Activated T-helper 1 cell treated with anti-CD3 and anti-CD28 coated beads, Interleukin-12 subunit alpha, Interleukin-12 subunit beta, Interleukin-2, Interleukin-4 antibody, amounts not matched to agents 30 ng/mL and 10 ng/mL and 1 ng/mL, durations not matched to agents 14 hours and 24 hours and 36 hours (primary cell): ENCODE measurements at regions of chr4 and their contacts with region 1.

Region 1: DNA sequence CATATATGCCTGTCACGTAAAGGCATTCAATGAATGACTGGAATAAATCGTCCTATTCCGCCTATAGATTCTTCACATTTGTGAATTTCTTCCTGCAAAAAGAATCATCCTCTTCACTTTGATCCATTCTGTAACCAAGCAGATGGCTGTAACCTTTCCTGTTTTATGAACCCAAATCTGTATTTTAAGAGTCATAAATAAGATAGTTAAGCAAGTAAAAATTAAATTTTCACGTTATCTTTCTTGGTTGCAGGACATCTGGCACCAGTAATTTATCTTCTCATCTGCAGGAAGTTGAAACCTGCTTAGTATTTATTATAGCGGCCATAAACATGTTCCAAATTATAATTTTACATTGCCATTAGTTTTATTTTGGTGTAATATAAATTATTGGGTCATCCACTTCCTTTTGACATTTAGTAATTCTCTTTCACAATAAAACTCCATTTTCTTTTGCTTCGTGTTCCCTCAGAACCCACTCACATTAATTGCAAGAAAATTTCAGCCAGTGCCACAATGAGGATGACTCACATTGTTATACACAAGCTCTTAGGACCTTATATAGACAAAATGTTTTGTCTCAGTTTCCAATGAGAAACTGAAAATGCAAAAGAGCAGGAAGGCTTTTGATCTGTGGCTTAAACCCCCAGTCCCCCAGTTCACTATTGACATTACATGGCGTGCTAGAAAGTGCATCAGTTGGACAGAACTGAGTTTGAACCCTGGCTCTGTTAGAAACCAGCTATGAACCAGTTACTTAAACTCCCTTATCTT is 51.1 kb downstream of the TMEM156 start:
- DNase-seq: no peak
- H3K4me3 Mint-ChIP-seq: peak overlapping the region; percentile 25
- H3K27ac Mint-ChIP-seq: peak overlapping the region; percentile 81
- H3K4me1 Mint-ChIP-seq: peaks cover 59% of the 10 kb centered on the region
- H3K27me3 Mint-ChIP-seq: no peaks in the 10 kb centered on the region

Region 2: GRCh38 chr4:38759113-38759789 is 221.8 kb before region 1 on chr4:
- intact Hi-C with region 1: loop called (anchors 10 kb)
- DNase-seq: peak; percentile 34
- H3K4me3 Mint-ChIP-seq: no peak overlapping the region
- H3K27ac Mint-ChIP-seq: no peak overlapping the region
- H3K4me1 Mint-ChIP-seq: peaks cover 29% of the 10 kb centered on the region
- H3K27me3 Mint-ChIP-seq: no peaks in the 10 kb centered on the region

Region 3: DNA sequence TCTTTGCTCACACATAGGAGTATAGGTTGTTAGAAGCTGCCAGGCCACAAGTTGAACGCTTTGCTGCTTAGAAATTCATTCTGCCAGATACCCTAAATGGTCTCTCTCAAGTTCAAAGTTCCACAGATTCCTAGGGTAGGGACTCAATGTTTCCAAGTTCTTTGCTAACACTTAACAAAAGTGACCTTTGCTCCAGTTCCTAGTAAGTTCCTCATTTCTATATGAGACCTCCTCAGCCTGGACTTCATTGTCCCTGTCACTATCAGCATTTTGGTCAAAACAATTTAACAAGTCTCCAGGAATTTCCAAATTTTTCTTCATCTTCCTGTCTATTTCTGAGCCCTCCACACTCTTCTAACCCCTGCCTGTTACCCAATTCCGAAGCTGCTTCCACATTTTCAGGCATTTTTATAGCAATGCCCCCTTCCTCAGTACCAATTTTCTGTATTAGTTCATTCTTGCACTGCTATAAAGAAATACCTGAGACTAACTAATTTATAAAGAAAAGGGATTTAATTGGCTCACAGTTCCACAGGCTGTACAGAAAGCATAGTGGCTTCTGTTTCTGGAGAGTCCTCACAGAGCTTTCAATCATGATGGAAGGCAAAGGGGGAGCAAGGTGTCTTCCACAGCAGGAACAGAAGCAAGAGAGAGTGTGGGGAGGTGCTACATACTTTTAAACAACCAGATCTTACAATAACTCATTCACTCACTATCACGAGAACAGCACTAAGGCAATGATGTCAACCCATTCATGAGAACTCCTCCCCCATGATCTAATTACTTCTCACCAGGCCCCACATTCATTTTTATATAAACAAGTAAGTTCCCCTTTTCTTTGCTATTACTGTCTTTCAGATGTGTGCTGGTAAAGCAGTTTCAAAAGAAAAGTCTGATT is 165.0 kb before region 1 on chr4:
- intact Hi-C with region 1: loop called (anchors 5 kb)
- DNase-seq: no peak
- H3K4me3 Mint-ChIP-seq: no peak overlapping the region
- H3K27ac Mint-ChIP-seq: no peak overlapping the region
- H3K4me1 Mint-ChIP-seq: peaks cover 45% of the 10 kb centered on the region
- H3K27me3 Mint-ChIP-seq: no peaks in the 10 kb centered on the region

Region 4: DNA sequence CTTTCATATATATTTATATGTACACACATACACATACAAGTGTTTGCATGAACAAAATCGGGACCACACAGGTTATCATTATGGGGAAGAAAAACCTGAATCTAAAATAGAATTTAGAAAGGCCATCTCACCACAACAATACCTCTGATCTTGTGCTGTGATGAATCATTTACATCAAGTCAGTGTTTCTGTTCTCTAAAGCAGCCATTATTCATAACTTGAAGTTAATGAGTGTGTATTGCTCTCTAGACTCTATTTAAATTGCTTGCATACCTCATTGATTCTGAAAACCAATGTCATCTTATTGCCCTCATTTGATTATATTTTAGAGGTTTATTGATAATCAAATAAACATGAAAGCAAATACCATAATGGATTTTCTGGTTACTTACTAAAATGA is 41.9 kb before region 1 on chr4:
- intact Hi-C with region 1: loop called (anchors 1 kb)
- DNase-seq: no peak
- H3K4me3 Mint-ChIP-seq: no peak overlapping the region
- H3K27ac Mint-ChIP-seq: peak overlapping the region; percentile 49
- H3K4me1 Mint-ChIP-seq: peaks cover 43% of the 10 kb centered on the region
- H3K27me3 Mint-ChIP-seq: no peaks in the 10 kb centered on the region

Region 5: GRCh38 chr4:38995670-38996005 is 14.5 kb after region 1 on chr4:
- intact Hi-C with region 1: loop called (anchors 2 kb)
- DNase-seq: no peak
- H3K4me3 Mint-ChIP-seq: no peak overlapping the region
- H3K27ac Mint-ChIP-seq: no peak overlapping the region
- H3K4me1 Mint-ChIP-seq: peaks cover 6% of the 10 kb centered on the region
- H3K27me3 Mint-ChIP-seq: no peaks in the 10 kb centered on the region

Region 6: DNA sequence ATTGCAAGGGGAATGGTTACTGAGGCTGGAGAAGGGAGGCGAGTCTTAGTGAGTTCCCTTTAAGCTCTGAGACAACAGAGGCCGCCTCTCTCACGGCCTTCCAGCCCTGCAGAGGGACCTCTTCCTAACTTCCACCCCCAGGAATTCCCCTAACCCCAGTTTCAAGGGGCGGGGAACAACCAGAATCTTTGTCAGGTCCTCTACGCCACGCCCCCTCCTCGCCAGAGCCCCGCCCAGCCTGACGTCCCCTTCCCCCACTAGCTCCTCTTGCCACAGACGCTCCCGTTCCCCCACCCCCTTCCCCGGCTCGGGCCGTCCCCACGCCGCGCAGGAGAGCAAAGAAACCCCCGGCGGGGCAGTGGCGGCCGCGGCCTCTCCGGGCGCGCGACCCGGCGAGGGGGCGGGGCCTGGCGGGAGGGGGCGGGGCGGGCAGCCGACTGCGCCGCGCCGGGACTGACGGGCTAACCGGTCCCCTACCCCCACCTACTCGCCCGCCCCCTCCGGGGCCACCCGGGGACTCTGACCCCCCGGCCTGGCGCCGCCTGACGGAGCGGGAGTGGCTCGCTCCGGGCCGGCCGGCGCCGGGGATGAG is 63.4 kb after region 1 on chr4:
- intact Hi-C with region 1: loop called (anchors 1 kb)
- DNase-seq: peak; percentile 96
- H3K4me3 Mint-ChIP-seq: peak overlapping the region; percentile 85
- H3K27ac Mint-ChIP-seq: peak overlapping the region; percentile 92
- H3K4me1 Mint-ChIP-seq: peaks cover 63% of the 10 kb centered on the region
- H3K27me3 Mint-ChIP-seq: no peaks in the 10 kb centered on the region

Region 7: DNA sequence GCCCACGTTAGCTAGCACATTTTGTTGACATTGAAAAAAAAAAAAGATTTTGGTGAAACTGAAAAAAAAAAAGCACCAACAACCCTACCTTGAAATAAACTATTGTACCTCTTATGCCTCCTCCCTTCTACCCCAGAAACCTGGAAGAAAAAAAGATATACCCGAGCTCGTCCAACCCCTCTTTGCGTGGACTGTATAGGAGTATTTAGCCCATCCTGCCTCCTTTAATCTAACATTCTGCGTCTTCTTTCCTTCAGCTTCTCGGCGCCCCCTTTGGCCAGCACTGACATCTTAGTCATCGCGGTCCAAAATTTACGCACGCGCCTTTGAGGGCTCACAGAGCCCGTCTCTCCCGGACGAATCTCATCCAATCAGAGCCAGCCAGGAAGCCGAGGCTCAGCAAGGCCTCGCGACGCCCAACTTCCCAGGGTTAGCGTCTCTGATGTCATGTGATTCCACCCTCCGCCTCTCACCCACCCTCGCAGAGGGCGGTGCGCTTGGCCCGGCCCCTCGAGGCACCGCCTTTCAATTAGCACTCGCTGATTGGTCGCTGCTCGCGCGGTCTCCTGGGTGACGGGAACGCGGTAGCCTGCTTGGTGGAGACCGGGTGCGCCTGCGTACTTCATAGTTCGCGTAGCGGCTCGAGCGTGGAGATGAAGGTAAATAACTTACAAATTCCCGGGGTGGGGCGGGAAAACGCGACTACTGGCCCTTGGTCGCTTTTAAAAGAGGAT is 201.0 kb after region 1 on chr4 and contains the start of gene WDR19:
- intact Hi-C with region 1: loop called (anchors 1 kb)
- DNase-seq: peak; percentile 98
- H3K4me3 Mint-ChIP-seq: no peak within 1 kb of the TSS
- H3K27ac Mint-ChIP-seq: no peak within 1 kb of the TSS
- H3K4me1 Mint-ChIP-seq: no peaks in the 10 kb centered on the region
- H3K27me3 Mint-ChIP-seq: peaks cover 15% of the 10 kb centered on the region
- total RNA-seq, gene WDR19: 12.6 and 13.7 TPM in 2 replicates